ENCODE measurements at regions of chr5 and their contacts with region 1.

Region 1: DNA sequence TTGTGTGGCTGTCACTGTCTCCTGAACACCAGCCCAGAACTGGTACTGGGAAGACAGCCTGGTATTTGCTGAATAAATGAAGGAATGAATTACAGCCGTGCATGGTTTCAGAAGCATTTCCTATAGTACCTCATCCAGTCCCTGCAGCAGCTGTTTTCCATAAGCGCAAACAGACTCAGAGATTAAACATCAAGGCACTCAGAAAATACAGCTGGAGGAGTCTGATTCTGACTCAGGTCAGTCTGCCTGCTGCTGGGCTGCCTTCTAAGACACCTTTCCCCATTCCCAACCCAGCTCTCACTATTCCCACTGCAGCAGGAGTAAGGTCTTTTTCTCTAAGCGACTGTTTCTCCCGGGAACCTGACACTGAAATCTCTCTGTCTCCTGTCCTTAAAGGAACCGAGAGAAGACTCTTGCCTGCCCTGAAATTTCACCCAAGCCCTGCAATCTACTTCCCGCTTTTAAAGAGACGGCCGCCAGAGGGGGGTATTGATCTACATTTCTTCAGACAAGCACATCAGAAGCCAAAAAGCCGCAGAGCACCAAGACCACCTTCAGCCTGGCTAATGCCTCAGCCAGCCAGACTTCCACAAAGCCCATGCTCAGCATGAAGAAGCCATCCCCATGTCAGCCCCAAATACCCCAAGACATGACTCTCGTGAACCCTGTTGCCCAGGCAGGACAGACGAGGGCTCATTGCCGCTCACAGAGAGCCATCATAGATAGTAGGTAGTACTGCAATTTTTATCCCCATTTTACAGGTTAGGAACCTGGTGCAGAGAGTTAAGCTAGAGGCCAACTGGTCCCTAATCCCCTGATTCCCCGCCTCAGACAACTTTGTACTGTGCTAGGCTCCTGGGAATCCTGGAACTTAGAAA is 5.4 kb upstream of the FOXI1 start:
- DNase-seq: peak; percentile 45 to 79
- ATAC-seq: peak in 2 of 3 donors; percentile 48 to 70
- H3K4me3 ChIP-seq: no peak overlapping the region
- H3K4me3 Mint-ChIP-seq: no peak overlapping the region
- H3K27ac ChIP-seq: no peak overlapping the region
- H3K27ac Mint-ChIP-seq: no peak overlapping the region
- H3K4me1 ChIP-seq: no peaks in the 10 kb centered on the region
- H3K4me1 Mint-ChIP-seq: peaks cover 0 to 15% of the 10 kb centered on the region in 2 donors
- H3K27me3 ChIP-seq: no peaks in the 10 kb centered on the region
- H3K27me3 Mint-ChIP-seq: peaks cover 6 to 24% of the 10 kb centered on the region in 2 donors
- CTCF ChIP-seq: peak; percentile 57

Region 2: DNA sequence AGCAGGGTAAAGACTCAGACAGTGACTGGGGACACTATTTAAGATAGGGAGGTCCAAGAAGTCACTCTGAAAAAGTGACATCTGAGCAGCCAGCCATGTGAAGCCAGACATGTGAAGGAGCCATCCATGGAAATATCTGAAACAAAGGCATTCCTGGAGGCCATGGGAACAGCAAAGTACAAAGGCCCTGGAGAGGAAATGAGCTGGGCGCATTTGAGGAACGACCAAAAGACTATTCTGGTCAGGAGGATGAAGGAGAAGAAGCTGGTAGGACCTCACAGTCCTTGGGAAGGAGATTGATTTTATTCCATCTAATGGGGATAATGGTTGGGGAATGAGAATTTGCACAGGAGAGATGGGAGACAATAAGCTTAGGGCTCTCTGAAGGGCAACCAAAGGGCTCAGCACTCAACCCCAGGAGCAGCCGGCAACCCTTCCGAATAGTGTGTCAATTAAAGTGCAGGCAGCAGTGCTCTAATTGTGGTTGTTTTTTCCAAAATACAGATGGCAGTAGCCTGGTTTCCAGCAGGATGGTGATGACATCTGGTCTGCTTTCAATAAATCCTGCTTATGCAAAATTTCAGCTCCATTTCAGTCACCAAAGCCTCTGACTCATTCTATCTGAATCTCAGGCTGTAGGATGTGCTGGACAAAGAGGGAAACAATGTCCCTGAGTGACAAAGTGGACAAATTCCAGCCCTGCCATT is 32.1 kb after region 1 on chr5:
- intact Hi-C with region 1: no loop called
- DNase-seq: no peak
- ATAC-seq: no peak
- H3K4me3 ChIP-seq: no peak overlapping the region
- H3K4me3 Mint-ChIP-seq: no peak overlapping the region
- H3K27ac ChIP-seq: no peak overlapping the region
- H3K27ac Mint-ChIP-seq: no peak overlapping the region
- H3K4me1 ChIP-seq: no peaks in the 10 kb centered on the region
- H3K4me1 Mint-ChIP-seq: no peaks in the 10 kb centered on the region
- H3K27me3 ChIP-seq: peaks cover 2% of the 10 kb centered on the region
- H3K27me3 Mint-ChIP-seq: peaks cover 13 to 60% of the 10 kb centered on the region in 2 donors
- CTCF ChIP-seq: no peak

Region 3: DNA sequence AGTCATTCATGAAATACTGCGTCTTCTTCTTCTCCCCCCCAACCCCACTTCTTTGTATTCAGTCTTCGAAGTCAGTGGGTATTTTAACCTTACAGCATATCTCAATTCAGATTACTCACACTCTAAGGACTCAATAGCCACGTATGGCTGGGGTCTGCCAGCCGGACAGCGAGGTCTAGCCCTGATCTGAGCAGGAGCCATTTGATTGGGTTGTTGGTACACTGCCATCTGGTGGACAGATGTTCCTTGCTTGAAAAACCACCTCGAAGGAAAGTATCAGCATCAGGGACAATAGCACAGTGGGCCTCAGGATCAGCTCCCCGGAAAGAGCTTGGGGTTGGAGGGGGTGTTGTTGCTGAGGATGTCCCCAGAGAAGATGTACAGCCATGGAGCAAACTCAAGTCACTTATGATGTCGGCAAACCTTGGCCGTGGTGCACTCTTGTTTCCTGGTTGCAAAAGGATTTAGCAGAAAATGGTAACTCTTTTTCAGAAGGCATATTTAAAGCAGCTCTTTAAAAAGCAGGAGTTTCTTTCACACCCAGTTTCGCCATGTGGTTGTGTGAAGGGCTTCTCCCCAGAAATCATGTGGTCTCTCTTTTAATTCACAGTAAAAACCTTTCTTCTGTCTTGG is 320.6 kb after region 1 on chr5:
- intact Hi-C with region 1: loop called (anchors 1 kb)
- DNase-seq: peak; percentile 35 to 82
- ATAC-seq: peak; percentile 42 to 73 (median 68)
- H3K4me3 ChIP-seq: no peak overlapping the region
- H3K4me3 Mint-ChIP-seq: no peak overlapping the region
- H3K27ac ChIP-seq: no peak overlapping the region
- H3K27ac Mint-ChIP-seq: no peak overlapping the region
- H3K4me1 ChIP-seq: peaks cover 4% of the 10 kb centered on the region
- H3K4me1 Mint-ChIP-seq: peaks cover 0 to 5% of the 10 kb centered on the region in 2 donors
- H3K27me3 ChIP-seq: no peaks in the 10 kb centered on the region
- H3K27me3 Mint-ChIP-seq: peaks cover 14 to 16% of the 10 kb centered on the region in 2 donors
- CTCF ChIP-seq: peak; percentile 74

Region 4: DNA sequence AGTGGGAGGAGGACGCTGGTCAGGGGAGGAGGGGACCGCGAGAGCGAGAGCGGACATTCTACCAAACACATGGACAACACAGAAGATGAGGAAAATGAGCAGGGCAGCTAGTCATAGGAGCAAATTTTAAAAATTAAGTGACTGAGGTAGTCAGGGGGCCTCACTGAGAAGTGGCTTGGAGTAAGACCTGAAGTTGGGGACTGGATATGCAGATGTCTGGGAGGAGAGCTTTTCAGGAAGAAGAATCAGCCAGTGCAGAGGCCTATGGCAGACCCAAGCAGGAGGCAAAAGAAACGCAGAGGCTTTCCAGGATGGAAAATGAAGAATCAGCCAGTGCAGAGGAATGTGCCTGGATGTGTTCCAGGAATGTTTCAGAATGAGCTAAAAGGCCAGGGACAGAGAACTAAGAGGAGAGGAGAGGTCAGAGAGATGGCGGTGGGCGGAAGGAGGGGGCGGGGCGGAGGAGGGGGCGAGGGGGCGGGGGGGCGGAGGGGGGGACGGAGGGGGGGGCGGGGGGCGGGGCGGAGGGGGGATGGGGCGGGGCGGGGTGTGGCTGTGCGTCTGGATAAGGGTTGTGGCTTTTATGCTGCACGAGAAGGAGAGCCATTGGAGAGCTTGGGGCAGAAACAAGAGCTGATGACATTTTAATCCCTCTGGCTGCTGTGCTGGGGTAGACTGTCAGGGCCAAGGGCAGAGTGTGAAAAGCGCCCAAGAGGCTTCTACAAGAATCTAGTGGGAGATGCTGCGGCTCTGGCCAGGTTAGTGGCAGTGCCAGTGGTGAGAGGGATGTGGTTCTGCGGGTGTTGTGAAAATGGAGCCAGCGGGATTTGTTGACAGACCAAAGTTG is 533.2 kb after region 1 on chr5:
- intact Hi-C with region 1: loop called (anchors 2 kb)
- DNase-seq: no peak
- ATAC-seq: peak in 1 of 3 donors; percentile 43
- H3K4me3 ChIP-seq: no peak overlapping the region
- H3K4me3 Mint-ChIP-seq: peak overlapping the region; percentile 79
- H3K27ac ChIP-seq: no peak overlapping the region
- H3K27ac Mint-ChIP-seq: peak overlapping the region in 1 of 2 donors; percentile 79
- H3K4me1 ChIP-seq: peaks cover 16% of the 10 kb centered on the region
- H3K4me1 Mint-ChIP-seq: peaks cover 21 to 22% of the 10 kb centered on the region in 2 donors
- H3K27me3 ChIP-seq: no peaks in the 10 kb centered on the region
- H3K27me3 Mint-ChIP-seq: peaks cover 7 to 24% of the 10 kb centered on the region in 2 donors
- CTCF ChIP-seq: peak; percentile 26

Measured in natural killer cell (primary cell).